Calu3 (cell line): ENCODE measurements at regions of chr17 and their contacts with region 1.

Region 1: GRCh38 chr17:42405963-42406495 is 17.0 kb downstream of the CAVIN1 start:
- DNase-seq: peak; percentile 95
- H3K4me3 Mint-ChIP-seq: no peak overlapping the region
- H3K27ac Mint-ChIP-seq: no peak overlapping the region
- H3K4me1 Mint-ChIP-seq: peaks cover 49% of the 10 kb centered on the region
- H3K27me3 Mint-ChIP-seq: no peaks in the 10 kb centered on the region
- CTCF ChIP-seq: peak; percentile 93

Region 2: GRCh38 chr17:41966463-41967140 is 439.4 kb before region 1 on chr17 and contains the start of gene CNP:
- CTCF ChIA-PET with region 1: interaction called, 5 read pairs
- intact Hi-C with region 1: loop called (anchors 5 kb)
- DNase-seq: peak; percentile 98
- H3K4me3 Mint-ChIP-seq: peak within 1 kb of the TSS; percentile 58
- H3K27ac Mint-ChIP-seq: peak within 1 kb of the TSS; percentile 48
- H3K4me1 Mint-ChIP-seq: peaks cover 16% of the 10 kb centered on the region
- H3K27me3 Mint-ChIP-seq: peaks cover 11% of the 10 kb centered on the region
- CTCF ChIP-seq: no peak
- total RNA-seq, gene CNP: 144 and 156 TPM in 2 replicates

Region 3: GRCh38 chr17:42221937-42222745 is 183.9 kb before region 1 on chr17:
- CTCF ChIA-PET with region 1: interaction called, 12 read pairs
- intact Hi-C with region 1: no loop called
- DNase-seq: peak; percentile 51
- H3K4me3 Mint-ChIP-seq: no peak overlapping the region
- H3K27ac Mint-ChIP-seq: no peak overlapping the region
- H3K4me1 Mint-ChIP-seq: no peaks in the 10 kb centered on the region
- H3K27me3 Mint-ChIP-seq: no peaks in the 10 kb centered on the region
- CTCF ChIP-seq: peak; percentile 63

Region 4: GRCh38 chr17:42287926-42288802 is 117.9 kb before region 1 on chr17 and contains the start of gene STAT5A:
- CTCF ChIA-PET with region 1: no interaction called
- intact Hi-C with region 1: no loop called
- DNase-seq: peak; percentile 76
- H3K4me3 Mint-ChIP-seq: peak within 1 kb of the TSS; percentile 23
- H3K27ac Mint-ChIP-seq: no peak within 1 kb of the TSS
- H3K4me1 Mint-ChIP-seq: no peaks in the 10 kb centered on the region
- H3K27me3 Mint-ChIP-seq: peaks cover 31% of the 10 kb centered on the region
- CTCF ChIP-seq: no peak
- total RNA-seq, gene STAT5A: 3.1 and 3.9 TPM in 2 replicates

Region 5: DNA sequence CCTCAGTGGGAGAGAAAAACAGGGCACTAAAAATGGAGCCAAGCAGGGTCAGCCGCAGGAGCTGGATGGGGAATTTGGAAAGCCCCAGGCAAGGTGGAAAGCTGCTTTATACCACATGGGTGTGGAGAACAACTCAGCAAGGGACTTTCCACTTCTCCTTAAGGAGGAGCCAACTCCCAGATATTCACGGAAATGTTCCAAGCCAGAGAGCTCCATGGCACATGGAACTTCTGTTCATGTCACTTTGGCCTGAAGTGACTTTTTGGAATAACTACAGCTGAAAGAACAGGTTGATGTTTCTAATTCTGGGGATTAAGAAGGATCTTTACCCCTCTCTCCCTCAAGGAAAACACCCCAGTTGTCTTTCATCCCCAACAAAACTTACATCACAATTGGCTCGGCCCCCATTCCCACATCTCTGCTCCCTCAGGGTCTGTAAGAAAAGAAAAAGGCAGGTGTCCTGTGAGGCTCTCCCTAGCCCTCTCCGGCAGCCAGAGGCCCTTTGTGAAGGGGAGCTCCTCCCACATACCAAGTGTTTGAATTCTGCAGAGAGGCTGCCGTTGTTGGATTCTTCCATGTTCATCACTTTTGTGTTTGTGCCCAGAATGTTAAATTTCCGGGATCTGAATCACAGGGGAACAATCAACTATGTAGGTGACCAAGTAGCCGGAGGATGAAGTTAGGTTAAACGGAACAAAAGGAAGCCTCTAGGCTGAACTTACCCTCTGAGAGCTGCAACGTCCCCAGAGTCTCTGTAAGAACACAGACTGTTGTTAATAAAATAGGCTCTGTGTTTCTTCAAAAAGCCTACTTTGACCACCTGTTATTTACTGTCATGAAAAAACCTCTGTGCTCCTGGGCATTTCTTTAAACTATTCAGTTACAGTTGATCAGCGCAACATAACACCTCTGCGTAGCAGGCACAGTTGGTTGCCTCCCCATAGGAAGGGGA is 76.7 kb before region 1 on chr17:
- CTCF ChIA-PET with region 1: interaction called, 10 read pairs
- intact Hi-C with region 1: no loop called
- DNase-seq: peak; percentile 35
- H3K4me3 Mint-ChIP-seq: no peak overlapping the region
- H3K27ac Mint-ChIP-seq: peak overlapping the region; percentile 69
- H3K4me1 Mint-ChIP-seq: peaks cover 12% of the 10 kb centered on the region
- H3K27me3 Mint-ChIP-seq: no peaks in the 10 kb centered on the region
- CTCF ChIP-seq: no peak

Region 6: DNA sequence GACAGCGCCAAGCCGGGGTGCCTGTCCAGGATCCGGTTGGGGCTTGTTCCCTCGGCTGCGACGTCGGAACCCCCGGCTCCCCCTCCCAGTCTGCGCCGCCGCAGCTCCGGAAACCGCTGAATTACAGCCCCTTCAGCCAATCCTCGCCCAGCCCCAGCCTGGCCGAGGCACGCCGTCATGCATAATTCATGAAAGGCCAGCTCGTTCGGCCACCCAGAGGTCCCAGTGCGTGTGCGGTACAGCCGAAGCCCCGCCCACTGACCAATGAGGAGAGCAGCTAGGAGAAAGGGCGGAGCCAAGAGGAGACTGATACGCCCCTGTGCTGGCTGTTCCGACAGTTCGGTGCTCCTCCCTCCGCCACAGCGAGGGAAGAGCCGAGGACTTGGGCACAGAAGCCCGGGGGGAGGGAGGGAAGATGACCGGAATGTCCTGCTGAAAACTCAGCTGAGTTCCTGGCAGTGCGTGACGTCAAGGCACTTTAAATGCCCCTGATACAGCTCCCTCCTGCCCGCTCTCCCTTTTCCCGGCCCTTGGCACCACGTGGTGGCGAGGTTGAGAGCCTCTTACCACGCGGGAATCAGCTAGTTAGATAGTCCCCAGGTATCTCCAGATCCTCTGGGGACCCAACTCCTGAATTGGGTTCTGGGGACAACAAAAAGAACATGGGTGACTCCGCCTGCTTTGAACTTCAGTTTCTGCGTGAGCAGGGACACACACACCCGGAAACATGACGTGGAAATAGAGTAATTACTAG is 17.5 kb before region 1 on chr17 and contains the start of gene STAT3:
- CTCF ChIA-PET with region 1: interaction called, 19 read pairs
- intact Hi-C with region 1: no loop called
- DNase-seq: peak; percentile 100
- H3K4me3 Mint-ChIP-seq: peak within 1 kb of the TSS; percentile 98
- H3K27ac Mint-ChIP-seq: peak within 1 kb of the TSS; percentile 95
- H3K4me1 Mint-ChIP-seq: peaks cover 42% of the 10 kb centered on the region
- H3K27me3 Mint-ChIP-seq: no peaks in the 10 kb centered on the region
- CTCF ChIP-seq: no peak
- total RNA-seq, gene STAT3: 183 and 196 TPM in 2 replicates

Region 7: GRCh38 chr17:42598905-42599304 is 192.9 kb after region 1 on chr17:
- CTCF ChIA-PET with region 1: no interaction called
- intact Hi-C with region 1: no loop called
- DNase-seq: no peak
- H3K4me3 Mint-ChIP-seq: no peak overlapping the region
- H3K27ac Mint-ChIP-seq: no peak overlapping the region
- H3K4me1 Mint-ChIP-seq: no peaks in the 10 kb centered on the region
- H3K27me3 Mint-ChIP-seq: no peaks in the 10 kb centered on the region
- CTCF ChIP-seq: no peak